Adrenal gland (tissue), 19 donors: ENCODE measurements at regions of chr19 and their contacts with region 1.

Region 1: GRCh38 chr19:14347999-14348889 is 33.0 kb upstream of the ADGRE5 start:
- DNase-seq: peak; percentile 36 to 69 (median 56)
- H3K4me3 ChIP-seq: peak overlapping the region in 1 of 4 donors; percentile 38
- H3K27ac ChIP-seq: no peak overlapping the region
- H3K4me1 ChIP-seq: peaks cover 0 to 7% of the 10 kb centered on the region in 2 donors
- H3K27me3 ChIP-seq: no peaks in the 10 kb centered on the region
- CTCF ChIP-seq: peak; percentile 74 to 96 (median 90)
- POLR2A ChIP-seq: no peak

Region 2: GRCh38 chr19:14150041-14150769 is 198.0 kb before region 1 on chr19:
- intact Hi-C with region 1: loop called in 1 of 2 experiments (anchors 10 kb)
- DNase-seq: no peak
- H3K4me3 ChIP-seq: no peak overlapping the region
- H3K27ac ChIP-seq: peak overlapping the region in 2 of 5 donors; percentile 41 to 51
- H3K4me1 ChIP-seq: peaks cover 11 to 18% of the 10 kb centered on the region in 2 donors
- H3K27me3 ChIP-seq: no peaks in the 10 kb centered on the region
- CTCF ChIP-seq: no peak
- POLR2A ChIP-seq: no peak

Region 3: DNA sequence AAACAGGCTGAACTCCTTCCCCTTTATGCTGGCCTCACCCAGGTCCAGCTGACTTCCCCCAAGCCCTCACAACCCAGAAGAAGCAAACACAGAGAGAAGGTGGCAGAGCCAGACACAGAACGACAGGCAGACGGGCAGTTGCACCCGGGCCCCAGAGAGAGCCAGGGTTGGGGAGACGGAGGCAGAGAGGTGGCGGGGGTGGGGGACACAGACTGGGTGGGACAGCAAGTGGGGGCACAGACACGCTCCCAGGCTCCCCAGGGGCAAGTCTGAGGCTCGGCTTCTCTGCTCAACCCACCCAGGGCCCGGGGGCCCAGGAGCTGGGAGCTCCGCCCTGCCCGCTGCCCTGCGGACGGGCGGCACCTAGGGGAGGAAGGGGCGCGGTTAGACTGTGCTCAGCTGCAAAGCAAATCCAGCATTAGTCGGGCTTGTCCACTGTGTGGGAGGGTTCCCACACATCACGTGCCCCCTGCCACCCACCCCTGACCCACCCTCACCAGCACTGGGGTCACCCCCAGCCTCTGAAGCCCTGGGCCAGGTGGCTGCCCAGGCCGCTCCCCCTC is 180.6 kb before region 1 on chr19:
- intact Hi-C with region 1: loop called in 1 of 2 experiments (anchors 10 kb)
- DNase-seq: no peak
- H3K4me3 ChIP-seq: no peak overlapping the region
- H3K27ac ChIP-seq: no peak overlapping the region
- H3K4me1 ChIP-seq: peaks cover 0 to 6% of the 10 kb centered on the region in 2 donors
- H3K27me3 ChIP-seq: no peaks in the 10 kb centered on the region
- CTCF ChIP-seq: no peak
- POLR2A ChIP-seq: no peak

Region 4: DNA sequence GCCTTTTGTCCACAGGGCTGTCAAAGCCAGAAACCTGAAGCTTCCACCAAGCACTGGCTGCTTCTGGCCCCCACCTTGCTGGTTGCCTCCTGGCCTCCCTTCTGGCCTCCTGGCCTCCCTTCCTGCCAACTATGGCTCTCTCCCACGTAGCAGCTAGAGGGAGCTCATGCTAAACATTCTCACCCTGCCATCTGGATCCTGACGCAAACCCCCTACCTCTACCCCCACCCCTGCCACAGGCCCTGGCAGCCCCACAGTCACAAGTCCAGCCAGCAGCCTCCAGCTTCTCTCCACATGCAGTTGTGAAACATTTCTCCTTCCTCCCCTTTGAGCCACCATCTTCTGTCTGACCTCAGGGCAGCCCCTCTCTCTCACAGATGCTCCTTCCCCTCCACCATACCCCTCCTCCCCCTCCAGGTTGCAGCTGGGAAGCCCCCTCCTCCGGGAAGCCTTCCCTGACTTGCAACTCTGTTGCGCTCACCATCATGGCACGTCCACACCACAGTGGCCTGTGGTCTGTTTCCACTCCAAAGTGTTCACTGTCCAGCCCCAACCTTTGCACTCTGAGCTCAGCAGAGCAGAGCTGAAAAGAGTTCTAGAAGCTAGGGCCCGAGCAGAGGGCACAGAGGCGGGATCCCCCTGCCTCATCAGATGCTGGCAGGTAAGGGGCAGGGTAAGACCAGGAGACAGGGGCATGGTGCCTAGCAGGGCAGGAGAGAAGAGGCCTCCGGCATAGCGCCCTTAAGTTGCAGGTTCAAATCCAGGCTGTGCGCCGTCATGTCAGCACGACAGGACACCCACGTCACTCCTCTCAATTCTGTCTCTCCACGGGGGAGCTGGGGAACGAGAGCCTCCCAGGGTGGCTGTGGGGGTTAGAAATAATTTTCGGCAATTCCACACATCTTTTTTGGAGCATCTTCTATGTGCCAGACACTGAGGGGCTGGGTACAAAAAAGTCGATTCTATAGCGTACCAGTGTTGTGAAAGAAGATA is 149.6 kb before region 1 on chr19:
- intact Hi-C with region 1: loop called (anchors 5 to 10 kb)
- DNase-seq: no peak
- H3K4me3 ChIP-seq: no peak overlapping the region
- H3K27ac ChIP-seq: no peak overlapping the region
- H3K4me1 ChIP-seq: no peaks in the 10 kb centered on the region
- H3K27me3 ChIP-seq: no peaks in the 10 kb centered on the region
- CTCF ChIP-seq: no peak
- POLR2A ChIP-seq: no peak